ENCODE measurements at regions of chr7 and their contacts with region 1.

Region 1: GRCh38 chr7:25851332-25852210 is 300.4 kb upstream of the NFE2L3 start:
- DNase-seq: peak; percentile 81 to 85
- ATAC-seq: peak; percentile 70 to 83 (median 76)
- H3K4me3 ChIP-seq: peak overlapping the region in 3 of 10 donors; percentile 18 to 39 (median 27)
- H3K27ac ChIP-seq: peak overlapping the region in 7 of 10 donors; percentile 12 to 84 (median 51)
- H3K4me1 ChIP-seq: peaks cover 6 to 77% (median 48%) of the 10 kb centered on the region in 9 donors
- H3K27me3 ChIP-seq: peaks cover 12 to 70% (median 56%) of the 10 kb centered on the region in 7 donors
- CTCF ChIP-seq: peak; percentile 71 to 87 (median 83)

Region 2: DNA sequence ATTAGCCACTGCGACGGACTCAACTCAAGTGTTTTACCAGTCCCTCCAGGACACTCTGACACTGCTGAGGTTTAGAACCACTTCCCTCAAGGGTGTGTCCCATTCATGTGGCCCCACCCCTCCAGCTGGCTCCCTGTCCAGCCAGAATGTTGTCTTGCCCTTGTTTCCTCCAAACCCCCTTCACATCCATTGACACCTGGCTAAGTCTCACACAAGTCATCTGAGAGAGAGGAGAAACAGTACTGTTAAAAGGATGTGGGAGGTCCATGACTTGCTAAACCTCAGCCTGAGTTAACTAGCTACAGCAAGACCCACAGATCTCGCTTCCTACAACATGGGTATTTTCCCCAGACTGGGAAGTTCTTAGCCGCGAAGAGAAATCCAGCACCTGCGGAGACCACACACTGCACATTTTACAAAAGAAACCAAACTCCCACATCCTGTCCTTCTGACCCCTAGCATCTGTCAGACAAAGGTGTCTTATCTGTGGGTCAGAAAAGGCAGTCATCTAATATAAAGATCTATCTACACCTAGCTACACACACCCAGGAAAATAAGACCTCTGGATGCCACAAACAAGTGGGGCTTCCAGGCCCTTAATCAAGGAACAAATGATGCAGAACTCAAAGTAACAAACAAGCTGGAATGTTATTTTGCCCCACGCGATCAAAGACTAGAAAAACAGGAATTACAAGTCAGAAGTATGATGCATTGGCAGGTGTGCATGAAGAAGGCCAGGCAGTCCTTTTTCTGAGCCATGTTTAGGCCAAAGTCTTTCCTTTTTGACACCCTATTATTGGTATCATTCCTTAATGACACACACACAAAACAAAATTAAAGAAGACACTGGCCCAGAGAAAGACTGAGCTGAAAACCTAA is 885.5 kb before region 1 on chr7:
- intact Hi-C with region 1: no loop called
- DNase-seq: no peak
- ATAC-seq: peak in 2 of 8 donors; percentile 41
- H3K4me3 ChIP-seq: no peak overlapping the region
- H3K27ac ChIP-seq: peak overlapping the region in 1 of 10 donors; percentile 15
- H3K4me1 ChIP-seq: peaks cover 0 to 50% (median 0%) of the 10 kb centered on the region in 9 donors
- H3K27me3 ChIP-seq: no peaks in the 10 kb centered on the region
- CTCF ChIP-seq: no peak

Region 3: GRCh38 chr7:25259587-25260243 is 591.9 kb before region 1 on chr7:
- intact Hi-C with region 1: loop called (anchors 1 to 10 kb)
- DNase-seq: peak; percentile 16 to 63
- ATAC-seq: peak; percentile 60 to 85 (median 70)
- H3K4me3 ChIP-seq: no peak overlapping the region
- H3K27ac ChIP-seq: no peak overlapping the region
- H3K4me1 ChIP-seq: peaks cover 0 to 27% (median 0%) of the 10 kb centered on the region in 9 donors
- H3K27me3 ChIP-seq: peaks cover 0 to 4% (median 0%) of the 10 kb centered on the region in 7 donors
- CTCF ChIP-seq: peak; percentile 65 to 89 (median 83)

Region 4: GRCh38 chr7:25565949-25566348 is 285.6 kb before region 1 on chr7:
- intact Hi-C with region 1: loop called (anchors 1 to 5 kb)
- DNase-seq: peak; percentile 33 to 36
- ATAC-seq: peak in 2 of 8 donors; percentile 27 to 43
- H3K4me3 ChIP-seq: no peak overlapping the region
- H3K27ac ChIP-seq: peak overlapping the region in 1 of 10 donors; percentile 3
- H3K4me1 ChIP-seq: peaks cover 0 to 9% (median 7%) of the 10 kb centered on the region in 9 donors
- H3K27me3 ChIP-seq: peaks cover 0 to 8% (median 0%) of the 10 kb centered on the region in 7 donors
- CTCF ChIP-seq: peak; percentile 98 to 100 (median 100)

Region 5: GRCh38 chr7:25669961-25670841 is 181.4 kb before region 1 on chr7:
- intact Hi-C with region 1: loop called in 2 of 10 experiments (anchors 5 to 10 kb)
- DNase-seq: no peak
- ATAC-seq: peak; percentile 67 to 86 (median 76)
- H3K4me3 ChIP-seq: peak overlapping the region in 1 of 10 donors; percentile 9
- H3K27ac ChIP-seq: peak overlapping the region in 9 of 10 donors; percentile 3 to 76 (median 68)
- H3K4me1 ChIP-seq: peaks cover 0 to 33% (median 16%) of the 10 kb centered on the region in 9 donors
- H3K27me3 ChIP-seq: no peaks in the 10 kb centered on the region
- CTCF ChIP-seq: no peak

Region 6: GRCh38 chr7:25720427-25720826 is 131.1 kb before region 1 on chr7:
- intact Hi-C with region 1: loop called in 4 of 10 experiments (anchors 5 to 10 kb)
- DNase-seq: no peak
- ATAC-seq: no peak
- H3K4me3 ChIP-seq: no peak overlapping the region
- H3K27ac ChIP-seq: no peak overlapping the region
- H3K4me1 ChIP-seq: peaks cover 0 to 6% (median under 1%) of the 10 kb centered on the region in 9 donors
- H3K27me3 ChIP-seq: no peaks in the 10 kb centered on the region
- CTCF ChIP-seq: peak in 8 of 9 donors; percentile 5 to 46 (median 26)

Region 7: DNA sequence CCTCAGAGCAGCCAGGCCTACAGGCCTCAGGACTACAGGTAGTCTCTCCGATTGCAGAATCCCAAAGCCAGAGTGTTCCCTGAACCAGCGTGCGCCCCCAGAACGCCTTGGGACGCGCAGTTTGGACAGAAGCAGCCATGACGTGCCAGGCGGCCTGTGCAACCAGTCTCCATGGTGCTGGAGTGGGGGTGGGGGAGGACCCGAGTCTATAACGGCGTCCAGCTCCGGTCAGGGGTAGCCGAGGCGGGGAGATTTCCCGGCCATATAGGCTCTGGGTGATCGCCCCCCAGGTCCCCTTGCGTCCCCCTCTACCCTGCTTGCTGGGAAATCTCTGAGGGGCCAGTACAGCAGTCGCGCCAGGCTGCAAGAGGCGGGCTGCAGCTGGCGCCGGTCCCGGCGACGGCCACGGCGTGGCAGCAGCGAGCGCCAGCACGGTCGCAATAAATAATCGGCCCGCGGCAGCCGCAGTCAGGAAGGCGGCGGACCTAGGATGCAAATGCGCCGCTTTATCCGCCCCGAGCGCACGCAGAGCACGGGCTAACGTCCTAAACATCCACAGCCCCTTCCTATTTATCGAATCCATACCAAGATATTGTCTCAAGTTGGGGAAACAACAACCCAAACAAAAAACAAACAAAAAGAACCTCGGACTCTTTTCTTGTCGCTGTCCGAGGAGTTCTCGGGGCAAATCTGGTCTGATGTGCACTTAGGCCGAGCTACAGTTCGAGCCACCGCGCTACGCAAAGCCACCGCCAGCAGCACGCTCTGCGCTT is 1299.2 kb after region 1 on chr7:
- intact Hi-C with region 1: loop called in 1 of 10 experiments (anchors 10 kb)
- DNase-seq: peak in 1 of 2 donors; percentile 66
- ATAC-seq: peak; percentile 62 to 85 (median 78)
- H3K4me3 ChIP-seq: peak overlapping the region in 9 of 10 donors; percentile 16 to 47 (median 30)
- H3K27ac ChIP-seq: no peak overlapping the region
- H3K4me1 ChIP-seq: peaks cover 0 to 58% (median 31%) of the 10 kb centered on the region in 9 donors
- H3K27me3 ChIP-seq: peaks cover 63 to 100% (median 100%) of the 10 kb centered on the region in 7 donors
- CTCF ChIP-seq: peak; percentile 60 to 87 (median 80)

Measured in heart right ventricle (tissue), 16 donors.